Lower leg skin (tissue), 4 donors: ENCODE measurements at regions of chr17 and their contacts with region 1.

Region 1: GRCh38 chr17:19447085-19447583 is 36.1 kb downstream of the RNF112 start:
- DNase-seq: peak; percentile 84 to 93
- H3K4me3 ChIP-seq: no peak overlapping the region
- CTCF ChIP-seq: peak in 2 of 3 donors; percentile 49 to 97
- POLR2A ChIP-seq: no peak

Region 2: DNA sequence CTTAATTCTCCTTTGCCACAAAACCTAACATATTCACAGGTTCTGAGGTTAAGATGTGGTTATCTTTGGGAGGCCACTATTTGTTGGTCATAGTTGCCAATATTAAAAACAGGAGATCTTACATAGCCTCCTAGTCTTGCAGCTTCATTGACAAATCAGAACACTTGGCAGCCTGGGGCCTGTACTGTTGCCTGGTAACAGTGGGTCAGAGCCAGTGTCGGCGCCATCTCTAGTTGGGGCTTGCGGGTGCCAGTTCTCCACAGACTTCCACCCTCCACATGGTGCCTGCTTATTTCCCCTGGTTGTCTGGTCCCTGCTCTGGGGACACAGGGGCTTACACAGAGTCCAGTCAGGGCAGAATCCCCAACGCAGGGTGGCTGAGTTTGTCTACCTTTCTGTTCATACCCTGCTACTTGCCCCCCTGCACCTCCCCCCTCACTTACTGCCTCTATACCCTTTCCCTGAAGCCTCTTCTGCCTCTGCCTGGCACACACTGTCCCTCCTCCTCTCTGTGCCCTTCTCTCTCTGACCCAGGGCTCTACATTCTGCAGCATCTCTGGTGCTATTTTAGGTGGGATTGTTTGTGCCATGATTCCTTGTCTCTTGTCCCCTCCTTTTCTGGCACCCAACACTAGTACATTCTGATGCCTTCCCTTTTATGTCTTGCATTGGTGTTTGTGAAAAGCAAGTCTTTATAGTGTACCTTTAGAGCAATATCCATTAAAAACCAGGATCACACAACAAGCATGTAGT is 196.5 kb before region 1 on chr17:
- intact Hi-C with region 1: loop called (anchors 5 kb)
- DNase-seq: peak; percentile 70 to 92
- H3K4me3 ChIP-seq: no peak overlapping the region
- CTCF ChIP-seq: no peak
- POLR2A ChIP-seq: no peak

Region 3: GRCh38 chr17:19362277-19363113 is 84.6 kb before region 1 on chr17 and contains the start of gene B9D1:
- intact Hi-C with region 1: loop called (anchors 5 kb)
- DNase-seq: peak; percentile 90 to 99
- H3K4me3 ChIP-seq: peak within 1 kb of the TSS; percentile 47
- CTCF ChIP-seq: peak in 1 of 3 donors; percentile 96
- POLR2A ChIP-seq: no peak
- total RNA-seq, gene B9D1: 2.4 to 24.5 (median 19.5) TPM

Region 4: GRCh38 chr17:19398301-19399181 is 48.6 kb before region 1 on chr17:
- intact Hi-C with region 1: no loop called
- DNase-seq: peak; percentile 74 to 94
- H3K4me3 ChIP-seq: no peak overlapping the region
- CTCF ChIP-seq: no peak
- POLR2A ChIP-seq: no peak

Region 5: GRCh38 chr17:19614900-19615299 is 167.8 kb after region 1 on chr17:
- intact Hi-C with region 1: no loop called
- DNase-seq: no peak
- H3K4me3 ChIP-seq: no peak overlapping the region
- CTCF ChIP-seq: no peak
- POLR2A ChIP-seq: no peak